ENCODE measurements at regions of chr14 and their contacts with region 1.

Region 1: DNA sequence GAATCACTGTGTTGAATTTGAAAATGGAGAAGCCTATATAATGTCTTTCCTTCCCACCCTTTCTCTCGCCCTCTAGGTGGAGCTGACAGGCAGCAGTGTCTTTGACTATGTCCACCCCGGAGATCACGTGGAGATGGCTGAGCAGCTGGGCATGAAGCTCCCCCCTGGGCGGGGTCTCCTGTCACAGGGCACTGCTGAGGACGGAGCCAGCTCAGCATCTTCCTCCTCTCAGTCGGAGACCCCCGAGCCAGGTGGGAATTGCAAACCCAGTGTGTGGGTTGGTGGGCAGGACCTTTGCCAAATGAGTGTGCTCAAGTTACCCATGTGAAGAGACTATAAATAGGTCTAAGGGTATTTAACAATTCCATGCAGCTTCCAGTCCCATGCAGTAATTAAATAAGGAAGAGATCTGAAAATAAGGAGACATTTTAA is 274.7 kb downstream of the EGLN3 start:
- DNase-seq: no peak
- ATAC-seq: peak; percentile 94
- H3K4me3 ChIP-seq: no peak overlapping the region
- H3K27ac ChIP-seq: no peak overlapping the region
- H3K4me1 ChIP-seq: no peaks in the 10 kb centered on the region
- H3K27me3 ChIP-seq: no peaks in the 10 kb centered on the region
- CTCF ChIP-seq: peak; percentile 14 to 51 (median 31); a peak in 4 of 6 replicates
- EP300 ChIP-seq: no peak
- POLR2A ChIP-seq: no peak
- RAD21 ChIP-seq: 0 out of 2 replicates have a peak, but pooled peaks have one; percentile 15

Region 2: GRCh38 chr14:33475623-33476022 is 200.5 kb before region 1 on chr14:
- CTCF ChIA-PET with region 1: interaction called, 77 read pairs
- POLR2A ChIA-PET with region 1: no interaction called
- RAD21 ChIA-PET with region 1: interaction called, 42 read pairs
- SMC1A ChIA-PET with region 1: interaction called, 51 read pairs
- in situ Hi-C with region 1: no loop called
- intact Hi-C with region 1: no loop called
- DNase-seq: no peak
- ATAC-seq: peak; percentile 77
- H3K4me3 ChIP-seq: no peak overlapping the region
- H3K27ac ChIP-seq: no peak overlapping the region
- H3K4me1 ChIP-seq: no peaks in the 10 kb centered on the region
- H3K27me3 ChIP-seq: no peaks in the 10 kb centered on the region
- CTCF ChIP-seq: peak; percentile 40 to 56 (median 46); a peak in 5 of 6 replicates
- EP300 ChIP-seq: no peak
- POLR2A ChIP-seq: no peak
- RAD21 ChIP-seq: peak; percentile 35; the same call in 1 of the 2 replicates

Region 3: GRCh38 chr14:33542338-33543287 is 133.5 kb before region 1 on chr14:
- CTCF ChIA-PET with region 1: interaction called, 7 read pairs
- POLR2A ChIA-PET with region 1: interaction called, 3 read pairs
- RAD21 ChIA-PET with region 1: interaction called, 12 read pairs
- SMC1A ChIA-PET with region 1: interaction called, 12 read pairs
- in situ Hi-C with region 1: no loop called
- intact Hi-C with region 1: no loop called
- DNase-seq: no peak
- ATAC-seq: peak; percentile 63
- H3K4me3 ChIP-seq: no peak overlapping the region
- H3K27ac ChIP-seq: no peak overlapping the region
- H3K4me1 ChIP-seq: peaks cover 5% of the 10 kb centered on the region; the same call in 1 of the 2 replicates
- H3K27me3 ChIP-seq: no peaks in the 10 kb centered on the region
- CTCF ChIP-seq: no peak
- EP300 ChIP-seq: no peak
- POLR2A ChIP-seq: no peak
- RAD21 ChIP-seq: no peak

Region 4: DNA sequence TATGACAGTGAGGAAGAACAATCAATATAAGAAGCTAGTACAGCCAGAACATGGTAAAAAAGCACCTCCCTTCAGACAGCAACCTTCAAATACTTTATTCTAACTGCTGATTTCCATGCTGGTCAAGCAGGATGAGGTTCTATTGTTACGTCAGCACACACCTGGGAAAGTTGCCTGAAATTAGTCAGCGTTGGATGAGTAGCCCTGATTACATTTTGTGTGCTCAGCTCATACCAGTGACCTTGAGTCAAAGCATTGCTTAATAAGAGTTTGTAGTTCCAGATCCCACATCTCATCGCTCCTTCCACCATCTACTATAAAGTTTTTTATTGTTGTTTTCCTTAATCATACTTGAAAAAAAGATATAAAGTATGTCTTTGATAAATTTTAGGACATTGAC is 86.8 kb before region 1 on chr14:
- CTCF ChIA-PET with region 1: no interaction called
- POLR2A ChIA-PET with region 1: no interaction called
- RAD21 ChIA-PET with region 1: interaction called, 3 read pairs
- SMC1A ChIA-PET with region 1: interaction called, 10 read pairs
- in situ Hi-C with region 1: no loop called
- intact Hi-C with region 1: no loop called
- DNase-seq: no peak
- ATAC-seq: no peak
- H3K4me3 ChIP-seq: no peak overlapping the region
- H3K27ac ChIP-seq: no peak overlapping the region
- H3K4me1 ChIP-seq: no peaks in the 10 kb centered on the region
- H3K27me3 ChIP-seq: no peaks in the 10 kb centered on the region; a peak in 2 of 4 replicates
- CTCF ChIP-seq: no peak
- EP300 ChIP-seq: no peak
- POLR2A ChIP-seq: no peak
- RAD21 ChIP-seq: no peak

Region 5: GRCh38 chr14:33657476-33657875 is 18.7 kb before region 1 on chr14:
- CTCF ChIA-PET with region 1: interaction called, 15 read pairs
- POLR2A ChIA-PET with region 1: interaction called, 6 read pairs
- RAD21 ChIA-PET with region 1: interaction called, 97 read pairs
- SMC1A ChIA-PET with region 1: interaction called, 96 read pairs
- in situ Hi-C with region 1: no loop called
- intact Hi-C with region 1: no loop called
- DNase-seq: no peak
- ATAC-seq: no peak
- H3K4me3 ChIP-seq: no peak overlapping the region
- H3K27ac ChIP-seq: no peak overlapping the region
- H3K4me1 ChIP-seq: no peaks in the 10 kb centered on the region
- H3K27me3 ChIP-seq: no peaks in the 10 kb centered on the region
- CTCF ChIP-seq: no peak
- EP300 ChIP-seq: no peak
- POLR2A ChIP-seq: no peak
- RAD21 ChIP-seq: no peak

Region 6: GRCh38 chr14:33728010-33728498 is 51.9 kb after region 1 on chr14:
- CTCF ChIA-PET with region 1: interaction called, 18 read pairs
- POLR2A ChIA-PET with region 1: interaction called, 5 read pairs
- RAD21 ChIA-PET with region 1: interaction called, 29 read pairs
- SMC1A ChIA-PET with region 1: interaction called, 21 read pairs
- in situ Hi-C with region 1: no loop called
- intact Hi-C with region 1: no loop called
- DNase-seq: no peak
- ATAC-seq: peak; percentile 72
- H3K4me3 ChIP-seq: no peak overlapping the region
- H3K27ac ChIP-seq: no peak overlapping the region
- H3K4me1 ChIP-seq: no peaks in the 10 kb centered on the region
- H3K27me3 ChIP-seq: no peaks in the 10 kb centered on the region; a peak in 1 of 4 replicates
- CTCF ChIP-seq: no peak
- EP300 ChIP-seq: no peak
- POLR2A ChIP-seq: no peak
- RAD21 ChIP-seq: no peak

Region 7: DNA sequence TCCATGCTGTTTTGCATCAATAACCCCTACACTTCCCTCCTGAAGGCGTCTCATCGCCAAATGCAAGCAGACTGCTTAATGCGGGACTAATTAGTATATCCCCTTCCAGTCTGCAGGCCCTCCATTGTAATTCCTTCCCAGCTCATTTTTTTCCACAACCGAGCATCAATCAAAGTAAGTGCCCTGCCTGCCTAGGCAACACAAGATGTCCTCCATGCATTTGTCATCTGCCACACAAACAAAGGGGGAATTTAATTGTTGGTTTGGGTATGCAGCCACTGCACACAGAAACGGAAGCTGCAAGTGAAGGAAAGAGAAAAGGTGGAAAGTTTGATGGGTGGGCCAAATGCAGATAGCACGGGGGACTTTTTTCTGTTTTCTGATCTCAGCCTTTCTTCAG is 106.8 kb after region 1 on chr14:
- CTCF ChIA-PET with region 1: interaction called, 334 read pairs
- POLR2A ChIA-PET with region 1: no interaction called
- RAD21 ChIA-PET with region 1: interaction called, 264 read pairs
- SMC1A ChIA-PET with region 1: interaction called, 158 read pairs
- in situ Hi-C with region 1: no loop called
- intact Hi-C with region 1: no loop called
- DNase-seq: no peak
- ATAC-seq: no peak
- H3K4me3 ChIP-seq: no peak overlapping the region
- H3K27ac ChIP-seq: no peak overlapping the region
- H3K4me1 ChIP-seq: no peaks in the 10 kb centered on the region
- H3K27me3 ChIP-seq: peaks cover 0 to under 1% of the 10 kb centered on the region in 2 experiments; a peak in 1 of 4 replicates
- CTCF ChIP-seq: no peak
- EP300 ChIP-seq: no peak
- POLR2A ChIP-seq: no peak
- RAD21 ChIP-seq: no peak